Activated naive CD4-positive, alpha-beta T cell treated with anti-CD3 and anti-CD28 coated beads, Interleukin-2, amount 10 ng/mL, durations not matched to agents 7 days and 5 days (primary cell): ENCODE measurements at regions of chr16 and their contacts with region 1.

Region 1: DNA sequence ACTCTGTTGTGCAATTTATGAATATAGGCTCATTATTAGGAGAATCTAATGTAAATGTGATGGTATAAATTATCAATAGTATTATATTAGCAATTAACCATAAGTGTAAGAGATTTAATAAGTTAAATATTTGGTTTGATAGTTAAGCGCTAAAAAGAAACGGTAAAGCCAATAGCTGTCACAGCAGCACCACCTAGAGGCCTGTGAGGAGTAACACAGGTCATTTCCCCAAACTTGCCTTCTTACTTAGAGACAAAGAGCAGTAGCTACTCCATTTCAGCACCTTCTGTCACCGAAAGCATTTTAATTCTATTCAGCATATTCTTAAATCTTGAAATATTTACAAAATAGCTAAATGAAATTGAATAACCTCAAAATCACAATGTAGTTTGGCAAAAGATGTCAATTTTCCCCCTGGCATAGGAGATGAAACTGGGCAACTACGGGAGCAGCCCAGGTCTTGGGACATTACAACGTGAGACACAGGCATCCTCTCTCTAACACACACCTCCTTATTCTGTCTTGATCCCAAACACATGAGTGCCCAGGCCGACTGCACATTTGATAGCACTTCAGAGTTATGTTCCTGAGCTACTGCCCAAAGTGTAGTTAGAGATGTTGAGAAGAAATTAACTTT is 14.2 kb upstream of the DYNLRB2 start:
- DNase-seq: peak; percentile 66
- H3K4me3 Mint-ChIP-seq: no peak overlapping the region
- H3K27ac Mint-ChIP-seq: no peak overlapping the region
- H3K4me1 Mint-ChIP-seq: peaks cover 11% of the 10 kb centered on the region
- H3K27me3 Mint-ChIP-seq: no peaks in the 10 kb centered on the region

Region 2: GRCh38 chr16:80466024-80466987 is 60.2 kb before region 1 on chr16:
- CTCF ChIA-PET with region 1: interaction called, 24 read pairs
- DNase-seq: peak; percentile 69
- H3K4me3 Mint-ChIP-seq: no peak overlapping the region
- H3K27ac Mint-ChIP-seq: no peak overlapping the region
- H3K4me1 Mint-ChIP-seq: no peaks in the 10 kb centered on the region
- H3K27me3 Mint-ChIP-seq: peaks cover 9% of the 10 kb centered on the region

Region 3: GRCh38 chr16:80573700-80574120 is 47.2 kb after region 1 on chr16:
- CTCF ChIA-PET with region 1: interaction called, 10 read pairs
- DNase-seq: no peak
- H3K4me3 Mint-ChIP-seq: no peak overlapping the region
- H3K27ac Mint-ChIP-seq: no peak overlapping the region
- H3K4me1 Mint-ChIP-seq: peaks cover 34% of the 10 kb centered on the region
- H3K27me3 Mint-ChIP-seq: no peaks in the 10 kb centered on the region

Region 4: GRCh38 chr16:80585764-80586163 is 59.2 kb after region 1 on chr16:
- CTCF ChIA-PET with region 1: interaction called, 46 read pairs
- DNase-seq: no peak
- H3K4me3 Mint-ChIP-seq: no peak overlapping the region
- H3K27ac Mint-ChIP-seq: no peak overlapping the region
- H3K4me1 Mint-ChIP-seq: peaks cover 54% of the 10 kb centered on the region
- H3K27me3 Mint-ChIP-seq: peaks cover 29% of the 10 kb centered on the region

Region 5: GRCh38 chr16:80803341-80804055 is 277.0 kb after region 1 on chr16:
- CTCF ChIA-PET with region 1: interaction called, 49 read pairs
- DNase-seq: peak; percentile 75
- H3K4me3 Mint-ChIP-seq: peak overlapping the region; percentile 96
- H3K27ac Mint-ChIP-seq: peak overlapping the region; percentile 91
- H3K4me1 Mint-ChIP-seq: peaks cover 41% of the 10 kb centered on the region
- H3K27me3 Mint-ChIP-seq: peaks cover 12% of the 10 kb centered on the region

Region 6: GRCh38 chr16:80824718-80825364 is 298.3 kb after region 1 on chr16:
- CTCF ChIA-PET with region 1: interaction called, 89 read pairs
- DNase-seq: peak; percentile 60
- H3K4me3 Mint-ChIP-seq: no peak overlapping the region
- H3K27ac Mint-ChIP-seq: no peak overlapping the region
- H3K4me1 Mint-ChIP-seq: no peaks in the 10 kb centered on the region
- H3K27me3 Mint-ChIP-seq: peaks cover 14% of the 10 kb centered on the region

Region 7: DNA sequence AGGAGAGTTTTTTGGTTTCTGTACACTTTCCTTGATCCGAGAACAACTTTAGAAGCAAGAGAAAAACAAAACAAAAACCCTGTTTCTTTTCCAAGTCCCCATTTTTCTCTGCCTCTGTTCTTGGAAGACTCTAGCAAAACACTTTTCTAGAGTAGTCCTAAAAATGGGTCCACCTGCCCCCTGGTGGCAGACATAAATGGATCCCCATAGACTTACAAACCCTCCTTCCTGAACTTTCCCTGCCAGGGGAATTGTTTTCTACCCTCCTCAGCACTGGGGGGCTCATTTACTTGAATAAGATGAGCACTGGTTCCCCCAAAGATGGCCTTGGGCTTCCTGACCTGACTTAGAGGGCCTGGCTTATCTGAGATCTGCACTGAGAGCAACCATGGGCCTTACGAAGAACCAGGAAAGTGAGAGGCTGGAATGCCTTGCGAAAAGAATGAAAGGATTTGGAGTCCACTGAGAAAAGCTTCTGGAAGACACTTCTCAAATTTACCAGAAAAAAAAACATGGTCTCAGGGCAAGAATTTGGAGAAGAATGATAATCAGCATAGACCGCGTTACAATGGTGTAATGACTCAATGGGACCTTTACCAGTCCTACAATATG is 325.8 kb after region 1 on chr16:
- CTCF ChIA-PET with region 1: interaction called, 16 read pairs
- DNase-seq: peak; percentile 46
- H3K4me3 Mint-ChIP-seq: no peak overlapping the region
- H3K27ac Mint-ChIP-seq: no peak overlapping the region
- H3K4me1 Mint-ChIP-seq: no peaks in the 10 kb centered on the region
- H3K27me3 Mint-ChIP-seq: peaks cover 5% of the 10 kb centered on the region